ENCODE measurements at regions of chr17 and their contacts with region 1.

Region 1: DNA sequence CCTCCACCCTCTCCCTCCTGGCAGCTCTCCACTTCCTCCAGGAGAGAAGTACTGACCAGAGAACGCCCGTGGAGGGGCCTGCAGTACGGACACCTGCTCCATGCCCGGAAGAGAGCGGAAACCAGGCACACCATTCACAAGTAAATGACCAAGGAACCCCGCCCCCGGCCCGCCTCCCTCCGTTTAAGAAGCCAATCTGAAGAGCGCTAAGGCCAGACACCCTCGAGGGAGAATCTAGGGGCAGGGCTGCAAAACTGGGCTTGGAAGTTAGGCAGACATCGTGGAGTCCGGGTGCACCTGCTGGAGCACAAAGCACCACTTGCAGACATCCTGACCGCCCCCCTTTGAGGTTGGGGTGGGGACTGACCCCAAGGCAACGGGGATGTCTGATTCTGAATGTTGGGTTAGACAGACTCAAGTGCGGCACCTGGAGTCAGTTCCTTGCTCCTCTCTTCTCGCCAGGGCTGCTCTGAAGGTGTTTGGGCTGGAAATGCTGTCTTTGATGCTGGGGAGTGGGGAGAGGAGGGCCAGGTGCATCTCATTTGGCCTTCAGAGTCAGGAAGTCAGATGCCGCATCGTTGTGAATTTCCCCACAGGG is 964 bp upstream of the FAAP100 start:
- DNase-seq: peak in 6 of 10 donors; percentile 50 to 87 (median 68)

Region 2: GRCh38 chr17:81512560-81513371 is 40.4 kb before region 1 on chr17 and contains the start of gene ACTG1:
- intact Hi-C with region 1: loop called (anchors 5 kb)
- DNase-seq: peak; percentile 82 to 99 (median 92)

Region 3: GRCh38 chr17:81576621-81577277 is 23.6 kb after region 1 on chr17:
- intact Hi-C with region 1: no loop called
- DNase-seq: peak in 3 of 10 donors; percentile 45 to 73 (median 67)

Region 4: DNA sequence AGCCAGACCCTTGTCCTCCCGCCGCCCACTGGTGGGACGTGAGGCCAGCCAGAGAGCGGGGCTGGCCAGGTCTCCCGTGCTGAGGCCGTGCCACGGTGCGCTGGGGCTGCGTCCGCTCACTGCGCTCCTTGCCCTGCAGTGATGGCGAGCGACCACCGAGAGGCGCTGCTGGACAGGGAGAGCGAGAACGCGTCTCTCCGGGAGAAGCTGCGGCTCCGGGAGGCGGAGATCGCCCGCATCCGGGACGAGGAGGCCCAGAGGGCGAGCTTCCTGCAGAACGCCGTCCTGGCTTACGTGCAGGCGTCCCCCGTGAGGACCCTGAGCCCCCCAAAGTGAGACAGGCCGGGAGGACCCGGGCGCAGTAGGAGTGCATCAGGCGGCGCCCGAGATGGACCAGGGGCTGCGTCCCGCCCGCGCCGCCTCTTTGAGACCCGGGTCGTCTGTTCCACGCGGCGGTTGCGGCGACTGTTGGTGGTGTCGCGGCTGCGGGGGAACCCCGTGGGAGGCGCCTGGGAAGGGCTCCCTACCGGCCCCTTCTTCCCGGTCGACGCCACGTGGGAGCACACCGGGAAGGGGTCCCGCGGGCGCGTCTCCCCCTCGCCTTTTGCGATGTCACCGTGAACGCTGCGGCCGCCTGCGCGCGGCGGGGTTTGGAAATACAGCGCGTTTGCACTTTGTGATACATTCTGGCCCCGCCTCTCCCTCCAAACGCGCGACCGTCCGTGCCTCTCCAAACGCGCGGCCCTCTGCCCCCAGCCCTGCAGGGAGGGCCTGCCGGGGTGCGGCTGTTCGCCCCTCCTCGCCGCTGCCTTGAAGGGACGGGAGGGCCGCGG is 477.6 kb after region 1 on chr17:
- intact Hi-C with region 1: no loop called
- DNase-seq: peak; percentile 80 to 98 (median 86)

Measured in posterior cingulate gyrus (tissue), 11 donors.